Heart right ventricle (tissue), 16 donors: ENCODE measurements at regions of chr5 and their contacts with region 1.

Region 1: GRCh38 chr5:36651761-36652685 is 45.6 kb downstream of the SLC1A3 start:
- DNase-seq: no peak
- ATAC-seq: peak; percentile 59 to 89 (median 78)
- H3K4me3 ChIP-seq: no peak overlapping the region
- H3K27ac ChIP-seq: peak overlapping the region; percentile 20 to 80 (median 68)
- H3K4me1 ChIP-seq: peaks cover 0 to 50% (median 29%) of the 10 kb centered on the region in 9 donors
- H3K27me3 ChIP-seq: no peaks in the 10 kb centered on the region
- CTCF ChIP-seq: no peak

Region 2: GRCh38 chr5:36611520-36612274 is 40.3 kb before region 1 on chr5:
- intact Hi-C with region 1: loop called in 3 of 10 experiments (anchors 5 kb)
- DNase-seq: peak in 1 of 2 donors; percentile 44
- ATAC-seq: peak; percentile 27 to 69 (median 58)
- H3K4me3 ChIP-seq: peak overlapping the region in 1 of 10 donors; percentile 66
- H3K27ac ChIP-seq: peak overlapping the region in 9 of 10 donors; percentile 16 to 86 (median 51)
- H3K4me1 ChIP-seq: peaks cover 0 to 56% (median 26%) of the 10 kb centered on the region in 9 donors
- H3K27me3 ChIP-seq: peaks cover 0 to 7% (median 0%) of the 10 kb centered on the region in 7 donors
- CTCF ChIP-seq: no peak

Region 3: GRCh38 chr5:36778336-36778735 is 126.3 kb after region 1 on chr5:
- intact Hi-C with region 1: no loop called
- DNase-seq: no peak
- ATAC-seq: no peak
- H3K4me3 ChIP-seq: no peak overlapping the region
- H3K27ac ChIP-seq: no peak overlapping the region
- H3K4me1 ChIP-seq: peaks cover 0 to 5% (median 0%) of the 10 kb centered on the region in 9 donors
- H3K27me3 ChIP-seq: peaks cover 0 to 8% (median 0%) of the 10 kb centered on the region in 7 donors
- CTCF ChIP-seq: no peak

Region 4: DNA sequence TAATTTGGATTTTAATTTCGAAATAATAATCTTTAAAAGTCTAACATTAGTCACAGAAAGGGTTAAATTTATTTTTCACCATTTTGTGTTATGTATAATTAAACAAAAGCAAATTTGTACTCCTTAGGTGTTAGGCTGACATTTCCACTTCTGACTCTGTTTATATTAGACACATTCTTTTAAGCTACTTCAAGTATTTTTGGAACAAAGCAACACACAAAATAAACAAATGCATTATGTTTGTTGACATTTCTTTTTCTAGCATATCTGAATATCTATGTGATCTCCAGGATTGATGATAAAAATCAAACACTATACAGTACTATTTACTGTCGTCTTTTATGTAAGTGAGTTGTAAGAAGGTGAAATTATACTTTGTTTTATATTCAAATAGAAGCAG is 180.3 kb after region 1 on chr5:
- intact Hi-C with region 1: no loop called
- DNase-seq: no peak
- ATAC-seq: no peak
- H3K4me3 ChIP-seq: no peak overlapping the region
- H3K27ac ChIP-seq: no peak overlapping the region
- H3K4me1 ChIP-seq: peaks cover 0 to 8% (median 0%) of the 10 kb centered on the region in 9 donors
- H3K27me3 ChIP-seq: no peaks in the 10 kb centered on the region
- CTCF ChIP-seq: no peak